MCF 10A (cell line): ENCODE measurements at regions of chr7 and their contacts with region 1.

Region 1: DNA sequence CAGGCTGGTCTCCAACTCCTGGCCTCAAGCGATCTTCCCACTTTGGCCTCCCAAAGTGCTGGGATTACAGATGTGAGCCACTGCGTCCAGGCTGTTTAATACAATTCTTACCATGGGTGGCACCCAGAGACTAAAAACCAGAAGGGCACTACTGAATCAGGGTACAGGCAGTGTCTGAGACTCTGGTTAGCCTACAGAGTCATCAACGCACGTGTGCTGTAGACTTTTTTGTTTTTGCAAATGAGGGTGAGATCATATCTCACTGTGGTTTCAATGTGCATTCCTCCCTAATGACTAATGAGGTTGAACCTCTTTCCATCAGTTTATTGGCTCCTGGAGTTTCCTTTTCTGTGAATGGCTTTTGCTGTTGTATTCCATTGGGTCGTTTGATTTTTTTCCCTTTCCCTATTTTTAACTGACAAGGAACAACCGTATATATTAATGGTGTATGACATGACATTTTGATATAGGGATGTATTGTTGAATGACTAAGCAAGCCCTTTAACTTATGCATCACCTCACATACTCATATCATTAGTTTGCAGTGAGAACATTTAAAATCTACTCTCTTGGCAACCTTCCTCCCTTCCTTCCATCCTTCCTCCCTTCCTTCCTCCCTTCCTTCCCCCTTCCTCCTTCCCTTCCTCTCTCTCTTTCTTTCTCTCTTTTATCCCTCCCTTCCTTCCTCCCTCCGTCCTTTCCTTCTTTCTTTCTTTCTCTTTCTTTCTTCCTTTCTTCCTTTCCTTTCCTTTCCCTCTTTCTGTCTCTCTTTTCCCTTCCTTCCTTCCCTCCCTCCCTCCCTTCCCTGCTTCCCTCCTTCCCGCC is 9.3 kb upstream of the METTL27 start:
- DNase-seq: peak; percentile 97
- H3K4me3 Mint-ChIP-seq: peak overlapping the region; percentile 43
- H3K27ac Mint-ChIP-seq: peak overlapping the region; percentile 94
- H3K4me1 Mint-ChIP-seq: peaks cover 39% of the 10 kb centered on the region
- H3K27me3 Mint-ChIP-seq: no peaks in the 10 kb centered on the region
- CTCF ChIP-seq: no peak

Region 2: DNA sequence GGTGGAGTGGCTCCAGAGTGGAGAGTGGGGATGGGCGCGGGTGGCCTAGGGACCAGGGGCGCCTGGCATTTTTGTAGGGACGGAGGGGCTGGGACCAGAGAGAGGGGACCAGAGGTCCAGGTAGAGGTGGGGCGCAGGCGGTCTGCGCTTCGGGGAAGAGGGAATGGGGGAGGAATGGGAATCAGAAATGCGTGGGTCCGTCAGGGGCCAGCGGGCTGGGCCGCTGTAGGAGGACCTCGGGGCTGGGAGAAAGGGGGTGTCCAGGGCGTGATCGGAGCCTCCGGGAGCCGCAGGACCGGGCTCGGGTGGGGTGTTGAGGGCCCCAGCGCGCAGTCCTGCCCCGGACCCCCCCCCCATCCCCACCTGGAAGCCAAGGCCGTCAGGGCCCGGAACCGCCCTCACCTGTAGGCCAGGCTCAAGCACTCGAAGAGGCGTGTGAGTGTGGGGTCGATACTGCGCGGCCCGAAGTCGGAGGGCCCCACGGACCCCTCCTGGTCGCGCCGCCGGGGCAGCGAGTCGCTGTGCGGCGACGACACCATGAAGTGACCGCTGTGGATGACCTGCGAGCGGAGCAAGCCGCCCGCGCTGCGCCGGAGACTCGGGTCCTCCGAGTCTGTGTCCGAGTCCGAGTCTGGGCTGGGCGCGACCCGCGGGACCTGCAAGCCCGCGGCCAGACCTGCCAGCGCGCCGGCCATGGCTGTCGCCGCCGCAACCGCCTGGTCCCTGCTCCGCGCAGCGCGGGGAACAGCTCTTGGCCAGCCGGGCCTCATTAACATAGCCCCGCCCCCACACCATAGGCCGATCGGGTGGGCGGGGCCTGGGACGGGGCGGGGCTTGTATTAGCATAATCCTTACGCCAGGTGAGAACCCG is 227.6 kb before region 1 on chr7 and contains the start of gene MLXIPL:
- CTCF ChIA-PET with region 1: interaction called, 3 read pairs
- POLR2A ChIA-PET with region 1: no interaction called
- intact Hi-C with region 1: loop called (anchors 1 kb)
- DNase-seq: peak; percentile 66
- H3K4me3 Mint-ChIP-seq: peak within 1 kb of the TSS; percentile 57
- H3K27ac Mint-ChIP-seq: no peak within 1 kb of the TSS
- H3K4me1 Mint-ChIP-seq: no peaks in the 10 kb centered on the region
- H3K27me3 Mint-ChIP-seq: peaks cover 5% of the 10 kb centered on the region
- CTCF ChIP-seq: no peak
- total RNA-seq, gene MLXIPL: 1.5 TPM in 1 of 2 replicates, not detected in the other

Region 3: DNA sequence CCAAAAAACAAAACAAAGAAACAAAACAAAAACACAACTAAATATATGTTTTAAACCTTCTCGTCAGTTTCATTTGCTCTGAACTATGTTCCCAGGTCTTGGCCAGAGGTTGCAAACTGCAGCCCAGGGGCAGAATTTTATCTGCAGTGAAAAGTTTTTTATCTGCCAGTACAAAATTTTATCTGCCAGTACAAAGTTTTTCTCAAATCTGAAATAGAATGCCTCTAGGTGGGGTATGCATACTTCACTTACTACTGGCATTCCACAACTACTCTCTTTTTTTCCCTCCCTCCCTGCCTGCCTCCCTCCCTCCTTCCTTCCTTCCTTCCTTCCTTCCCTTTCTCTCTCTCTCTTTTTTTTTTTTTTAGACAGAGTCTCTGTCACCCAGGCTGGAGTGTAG is 72.1 kb before region 1 on chr7:
- CTCF ChIA-PET with region 1: interaction called, 4 read pairs
- POLR2A ChIA-PET with region 1: interaction called, 3 read pairs
- intact Hi-C with region 1: loop called (anchors 1 kb)
- DNase-seq: no peak
- H3K4me3 Mint-ChIP-seq: no peak overlapping the region
- H3K27ac Mint-ChIP-seq: no peak overlapping the region
- H3K4me1 Mint-ChIP-seq: no peaks in the 10 kb centered on the region
- H3K27me3 Mint-ChIP-seq: no peaks in the 10 kb centered on the region
- CTCF ChIP-seq: no peak

Region 4: DNA sequence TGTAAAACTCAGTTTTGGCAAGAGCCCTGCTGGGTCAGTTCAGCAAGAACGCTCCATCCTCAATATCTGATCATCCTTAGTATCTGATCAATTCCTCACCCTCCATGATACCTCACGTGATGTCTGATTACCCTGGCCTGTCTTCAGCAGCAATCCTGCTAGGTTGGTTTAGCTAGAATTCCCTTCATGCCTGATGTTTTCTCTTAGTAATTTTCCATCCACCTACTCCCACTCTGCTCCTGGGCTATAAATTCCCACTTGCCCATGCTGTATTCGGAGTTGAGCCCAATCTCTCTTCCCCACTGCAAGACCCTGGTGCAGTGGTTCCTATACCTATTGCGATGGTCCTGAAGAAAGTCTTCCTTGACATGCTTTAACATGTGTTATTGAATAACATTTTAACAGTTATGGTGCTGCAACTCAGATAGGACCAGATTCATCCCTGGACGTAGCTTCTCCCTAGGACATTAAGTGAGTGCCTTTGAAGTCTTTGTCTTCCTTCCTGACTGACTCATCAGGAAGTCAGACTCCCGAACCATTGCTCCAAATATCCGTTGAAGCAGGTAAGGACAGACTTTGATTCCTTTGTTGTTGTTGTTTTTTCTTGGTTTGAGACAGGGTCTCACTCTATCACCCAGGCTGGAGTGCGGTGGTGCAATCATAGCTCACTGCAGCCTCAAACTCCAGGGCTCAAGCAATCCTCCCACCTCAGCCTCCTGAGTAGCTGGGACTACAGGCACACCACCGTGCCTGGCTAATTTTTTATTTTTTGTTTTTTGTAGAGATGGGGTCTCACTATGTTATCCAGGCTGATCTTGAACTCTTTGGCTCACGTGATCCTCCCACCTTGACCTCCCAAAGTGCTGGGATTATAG is 52.1 kb before region 1 on chr7:
- CTCF ChIA-PET with region 1: no interaction called
- POLR2A ChIA-PET with region 1: interaction called, 16 read pairs
- intact Hi-C with region 1: no loop called
- DNase-seq: peak; percentile 33
- H3K4me3 Mint-ChIP-seq: no peak overlapping the region
- H3K27ac Mint-ChIP-seq: no peak overlapping the region
- H3K4me1 Mint-ChIP-seq: peaks cover 7% of the 10 kb centered on the region
- H3K27me3 Mint-ChIP-seq: no peaks in the 10 kb centered on the region
- CTCF ChIP-seq: no peak

Region 5: DNA sequence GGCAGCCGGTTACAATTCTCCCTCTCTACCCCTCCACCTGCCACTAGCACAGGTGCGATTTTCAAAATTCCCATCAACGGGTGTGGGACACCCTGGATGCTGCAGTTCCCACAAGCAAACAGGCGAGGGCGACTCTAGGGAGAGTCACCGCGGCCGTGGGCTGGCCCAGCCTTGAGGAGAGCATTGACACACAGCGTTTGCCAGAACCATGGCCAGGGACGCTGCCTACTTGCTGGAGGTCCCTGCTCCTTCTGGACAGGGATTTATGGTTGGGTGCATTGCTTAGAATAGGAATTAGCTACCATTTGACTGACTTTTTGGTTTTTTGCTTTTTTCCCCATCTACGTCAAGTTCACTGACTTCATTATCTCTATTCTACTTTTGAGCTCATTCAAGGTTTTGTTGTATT is 39.9 kb before region 1 on chr7:
- CTCF ChIA-PET with region 1: interaction called, 10 read pairs
- POLR2A ChIA-PET with region 1: interaction called, 6 read pairs
- intact Hi-C with region 1: loop called (anchors 1 kb)
- DNase-seq: peak; percentile 84
- H3K4me3 Mint-ChIP-seq: no peak overlapping the region
- H3K27ac Mint-ChIP-seq: no peak overlapping the region
- H3K4me1 Mint-ChIP-seq: peaks cover 5% of the 10 kb centered on the region
- H3K27me3 Mint-ChIP-seq: no peaks in the 10 kb centered on the region
- CTCF ChIP-seq: peak; percentile 77

Region 6: DNA sequence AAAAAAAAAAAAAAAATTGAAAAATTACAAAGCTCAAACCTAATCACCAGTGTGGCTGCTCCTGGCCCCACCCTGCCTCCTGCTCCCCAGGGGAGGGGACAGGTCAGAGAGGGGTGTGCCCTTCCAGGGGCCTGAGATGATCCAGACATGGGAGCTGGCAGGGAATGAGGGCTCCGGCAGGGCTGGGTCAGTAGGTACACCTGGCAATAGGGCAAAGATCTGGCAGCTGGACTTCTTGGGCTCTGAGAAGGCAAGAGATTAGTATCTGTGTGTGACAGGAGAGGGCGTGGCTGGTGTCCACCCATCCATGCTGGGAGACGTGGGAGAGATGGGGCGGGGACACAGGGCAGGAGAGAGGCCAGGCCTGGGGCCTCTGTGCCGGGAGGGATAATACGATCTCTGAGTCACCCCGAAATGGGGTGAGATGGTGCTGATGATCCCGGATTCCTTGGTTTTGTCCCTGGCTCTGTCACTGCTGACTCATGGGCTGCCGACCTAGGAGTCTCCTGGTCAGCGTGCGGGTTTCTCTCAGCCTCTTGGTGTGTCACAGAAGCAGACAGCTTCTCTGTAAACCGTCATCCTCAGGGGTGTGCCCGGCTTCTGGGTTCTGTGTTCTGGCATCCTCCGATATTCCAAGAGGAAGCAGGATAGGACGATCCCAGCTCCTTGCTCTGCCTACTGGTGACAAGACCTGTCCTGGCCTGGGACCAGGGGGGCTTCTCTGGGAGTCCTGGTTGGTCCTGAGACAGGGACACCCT is 29.1 kb before region 1 on chr7:
- CTCF ChIA-PET with region 1: interaction called, 21 read pairs
- POLR2A ChIA-PET with region 1: interaction called, 48 read pairs
- intact Hi-C with region 1: loop called (anchors 1 kb)
- DNase-seq: peak; percentile 98
- H3K4me3 Mint-ChIP-seq: peak overlapping the region; percentile 13
- H3K27ac Mint-ChIP-seq: peak overlapping the region; percentile 80
- H3K4me1 Mint-ChIP-seq: peaks cover 31% of the 10 kb centered on the region
- H3K27me3 Mint-ChIP-seq: no peaks in the 10 kb centered on the region
- CTCF ChIP-seq: no peak

Region 7: DNA sequence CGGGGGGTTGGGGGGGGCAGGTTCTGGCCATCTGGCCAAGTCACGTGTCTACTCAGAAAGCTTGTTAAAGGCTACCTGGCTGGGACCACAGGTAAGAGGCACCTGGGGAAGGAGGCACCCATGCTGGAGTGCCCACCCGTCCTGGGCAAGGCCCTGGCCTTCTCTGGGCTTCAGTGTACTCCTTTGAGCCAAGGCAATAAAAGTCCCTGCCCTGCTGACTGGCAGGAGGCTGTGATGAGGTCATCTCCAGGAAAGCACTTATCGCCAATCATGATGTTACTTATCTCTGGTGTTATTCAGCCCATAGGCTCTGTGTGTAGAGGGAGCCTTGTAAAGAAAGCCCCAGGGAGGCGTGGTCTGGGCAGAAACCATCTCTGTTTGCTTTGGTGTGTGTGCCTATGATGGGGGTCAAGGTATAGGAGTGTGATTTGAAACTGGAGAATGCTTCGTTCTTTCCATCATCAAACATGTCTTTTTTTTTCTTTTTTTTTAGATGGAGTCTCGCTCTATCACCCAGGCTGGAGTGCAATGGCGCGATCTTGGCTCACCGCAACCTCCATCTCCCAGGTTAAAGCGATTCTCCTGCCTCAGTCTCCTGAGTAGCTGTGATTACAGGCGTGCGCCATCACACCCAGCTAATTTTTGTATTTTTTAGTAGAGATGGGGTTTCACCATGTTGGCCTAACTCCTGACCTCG is 23.4 kb before region 1 on chr7:
- CTCF ChIA-PET with region 1: interaction called, 21 read pairs
- POLR2A ChIA-PET with region 1: interaction called, 48 read pairs
- intact Hi-C with region 1: no loop called
- DNase-seq: peak; percentile 58
- H3K4me3 Mint-ChIP-seq: peak overlapping the region; percentile 15
- H3K27ac Mint-ChIP-seq: peak overlapping the region; percentile 61
- H3K4me1 Mint-ChIP-seq: peaks cover 35% of the 10 kb centered on the region
- H3K27me3 Mint-ChIP-seq: no peaks in the 10 kb centered on the region
- CTCF ChIP-seq: no peak

Region 8: GRCh38 chr7:73865738-73866445 is 14.3 kb after region 1 on chr7:
- CTCF ChIA-PET with region 1: no interaction called
- POLR2A ChIA-PET with region 1: no interaction called
- intact Hi-C with region 1: no loop called
- DNase-seq: peak; percentile 68
- H3K4me3 Mint-ChIP-seq: no peak overlapping the region
- H3K27ac Mint-ChIP-seq: no peak overlapping the region
- H3K4me1 Mint-ChIP-seq: no peaks in the 10 kb centered on the region
- H3K27me3 Mint-ChIP-seq: no peaks in the 10 kb centered on the region
- CTCF ChIP-seq: peak; percentile 77